ENCODE measurements at regions of chr14 and their contacts with region 1.

Region 1: DNA sequence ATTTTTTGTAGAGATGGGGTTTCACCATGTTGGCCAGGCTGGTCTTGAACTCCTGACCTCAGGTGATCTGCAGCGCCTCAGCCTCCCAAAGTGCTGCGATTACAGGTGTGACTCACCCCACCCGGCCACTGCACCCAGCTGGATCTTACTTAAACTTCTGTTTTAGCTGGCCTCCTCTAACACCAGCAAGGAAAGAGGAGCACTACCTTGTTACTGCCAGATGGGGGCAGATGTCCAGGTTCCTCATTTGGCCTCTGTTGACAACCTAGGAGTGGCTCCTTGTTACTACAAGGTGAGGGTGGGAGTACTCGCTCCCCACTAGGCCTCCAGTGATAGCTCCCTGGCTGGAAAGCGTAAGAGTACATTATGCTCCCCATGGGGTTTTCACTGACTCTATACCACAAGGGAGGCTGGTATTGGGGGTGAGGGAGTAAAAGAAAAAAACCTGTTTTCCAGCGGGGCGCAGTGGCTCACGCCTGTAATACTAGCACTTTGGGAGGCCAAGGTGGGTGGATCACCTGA is 13.1 kb upstream of the ARF6 start:
- DNase-seq: no peak
- H3K4me3 ChIP-seq: no peak overlapping the region
- CTCF ChIP-seq: peak; percentile 65

Region 2: DNA sequence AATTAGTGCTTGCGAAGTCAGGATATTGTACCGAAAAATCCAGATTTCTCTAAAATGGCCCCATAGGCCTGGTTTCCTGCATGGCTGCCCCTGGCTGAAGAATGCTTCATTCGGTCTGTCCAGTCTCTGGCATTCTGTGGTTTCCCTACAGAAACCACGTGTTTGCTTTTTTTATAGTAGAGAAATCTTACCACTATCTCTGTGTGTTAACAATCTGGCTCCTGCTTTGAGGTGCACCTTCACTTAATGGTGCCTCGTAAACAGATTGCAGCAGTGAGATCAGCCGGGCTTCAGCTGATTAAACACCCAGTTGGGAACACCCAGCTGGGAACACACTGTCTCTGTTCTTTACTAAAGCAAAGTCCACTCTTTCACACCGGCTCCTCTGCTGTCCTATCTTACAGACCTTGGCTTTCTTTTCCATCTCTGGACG is 238.0 kb before region 1 on chr14:
- CTCF ChIA-PET with region 1: no interaction called
- POLR2A ChIA-PET with region 1: no interaction called
- DNase-seq: no peak
- H3K4me3 ChIP-seq: no peak overlapping the region
- CTCF ChIP-seq: no peak

Region 3: GRCh38 chr14:49892636-49893308 is 13.0 kb after region 1 on chr14 and contains the start of gene ARF6:
- CTCF ChIA-PET with region 1: interaction called, 15 read pairs
- POLR2A ChIA-PET with region 1: no interaction called
- DNase-seq: peak; percentile 77
- H3K4me3 ChIP-seq: peak within 1 kb of the TSS; percentile 80
- CTCF ChIP-seq: peak; percentile 15

Region 4: GRCh38 chr14:50060871-50061663 is 181.3 kb after region 1 on chr14:
- CTCF ChIA-PET with region 1: interaction called, 15 read pairs
- POLR2A ChIA-PET with region 1: no interaction called
- DNase-seq: peak; percentile 83
- H3K4me3 ChIP-seq: peak overlapping the region; percentile 2
- CTCF ChIP-seq: no peak

Region 5: GRCh38 chr14:50106178-50106577 is 226.4 kb after region 1 on chr14:
- CTCF ChIA-PET with region 1: interaction called, 44 read pairs
- POLR2A ChIA-PET with region 1: no interaction called
- DNase-seq: no peak
- H3K4me3 ChIP-seq: no peak overlapping the region
- CTCF ChIP-seq: no peak